Right ventricle myocardium inferior (tissue), 1 donor: ENCODE measurements at regions of chr7 and their contacts with region 1.

Region 1: GRCh38 chr7:129091484-129092002 is 36.6 kb upstream of the TNPO3 start:
- DNase-seq: peak; percentile 83
- ATAC-seq: peak; percentile 78

Region 2: DNA sequence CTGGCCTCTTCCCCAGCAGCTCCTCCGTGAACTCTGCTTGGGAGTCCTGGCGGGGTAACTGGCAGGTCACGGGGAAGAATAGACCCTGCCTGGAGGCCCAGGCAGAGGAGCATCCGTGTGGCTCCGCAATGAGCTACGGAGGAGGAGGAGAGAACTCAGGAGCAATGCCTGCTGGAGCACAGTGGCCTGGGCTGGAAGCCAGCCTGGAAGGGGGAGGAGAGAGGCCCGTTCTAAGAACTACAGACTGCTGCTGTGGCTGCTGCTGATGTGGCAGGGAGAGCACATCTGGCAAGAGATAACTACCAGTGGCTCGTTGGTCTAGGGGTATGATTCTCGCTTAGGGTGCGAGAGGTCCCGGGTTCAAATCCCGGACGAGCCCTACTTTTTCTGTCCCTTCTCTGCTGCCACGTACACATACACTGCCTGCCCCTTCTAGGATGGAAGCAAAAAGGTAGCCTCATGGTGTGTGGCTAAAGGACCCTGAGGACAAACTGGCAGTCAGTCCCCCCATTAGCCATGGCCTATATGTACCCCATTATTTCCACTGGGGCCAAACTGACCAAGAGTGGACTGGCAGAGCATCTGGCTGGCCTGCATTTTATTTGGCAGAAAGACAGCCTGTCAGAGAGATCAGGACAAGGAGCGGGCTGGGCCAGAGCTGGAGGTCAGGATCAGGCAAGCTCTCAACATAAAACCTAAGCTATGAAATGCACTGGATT is 308.2 kb before region 1 on chr7:
- intact Hi-C with region 1: no loop called
- DNase-seq: peak; percentile 89
- ATAC-seq: peak; percentile 93

Region 3: DNA sequence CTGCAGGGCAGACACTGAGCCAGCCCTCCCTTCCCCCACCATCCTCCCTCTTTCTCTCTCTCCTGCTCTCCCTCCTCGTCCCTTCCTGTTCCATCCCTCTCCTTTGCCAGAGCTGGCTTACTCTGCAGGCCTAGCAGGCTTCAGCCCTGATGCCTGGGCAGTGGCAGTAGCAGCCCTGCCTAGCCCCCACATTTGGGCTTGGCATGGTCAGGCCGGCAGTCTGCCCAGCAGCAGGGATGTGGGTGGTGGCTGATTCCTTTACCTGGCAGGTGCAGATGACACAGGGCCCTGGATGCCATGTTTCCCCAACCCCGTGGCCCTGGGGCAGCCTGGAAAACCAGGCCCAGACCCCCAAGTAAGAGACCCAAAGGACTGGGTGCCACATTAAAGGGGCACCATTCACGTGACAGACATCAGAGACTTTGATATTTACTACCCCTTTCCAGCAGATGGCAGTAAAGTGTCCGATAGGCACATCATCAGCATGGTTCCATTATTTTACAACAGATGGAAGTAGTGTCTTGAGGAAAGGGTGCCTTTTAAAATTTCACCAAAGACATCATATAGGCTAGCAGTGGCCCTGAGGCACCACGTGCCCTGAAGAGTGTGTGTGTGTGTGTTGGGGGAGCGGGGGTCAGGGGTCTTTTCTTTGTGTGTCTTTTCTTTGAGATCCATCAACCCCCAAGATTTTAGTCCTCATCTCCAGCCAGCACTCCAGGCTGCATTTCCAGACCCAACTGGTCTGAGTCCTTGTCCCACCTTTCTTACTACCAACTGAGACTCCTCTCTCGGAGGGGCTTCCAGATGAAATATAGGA is 187.0 kb before region 1 on chr7:
- intact Hi-C with region 1: loop called (anchors 5 kb)
- DNase-seq: peak; percentile 25
- ATAC-seq: peak; percentile 38